HEK293 (cell line): ENCODE measurements at regions of chr19 and their contacts with region 1.

Region 1: DNA sequence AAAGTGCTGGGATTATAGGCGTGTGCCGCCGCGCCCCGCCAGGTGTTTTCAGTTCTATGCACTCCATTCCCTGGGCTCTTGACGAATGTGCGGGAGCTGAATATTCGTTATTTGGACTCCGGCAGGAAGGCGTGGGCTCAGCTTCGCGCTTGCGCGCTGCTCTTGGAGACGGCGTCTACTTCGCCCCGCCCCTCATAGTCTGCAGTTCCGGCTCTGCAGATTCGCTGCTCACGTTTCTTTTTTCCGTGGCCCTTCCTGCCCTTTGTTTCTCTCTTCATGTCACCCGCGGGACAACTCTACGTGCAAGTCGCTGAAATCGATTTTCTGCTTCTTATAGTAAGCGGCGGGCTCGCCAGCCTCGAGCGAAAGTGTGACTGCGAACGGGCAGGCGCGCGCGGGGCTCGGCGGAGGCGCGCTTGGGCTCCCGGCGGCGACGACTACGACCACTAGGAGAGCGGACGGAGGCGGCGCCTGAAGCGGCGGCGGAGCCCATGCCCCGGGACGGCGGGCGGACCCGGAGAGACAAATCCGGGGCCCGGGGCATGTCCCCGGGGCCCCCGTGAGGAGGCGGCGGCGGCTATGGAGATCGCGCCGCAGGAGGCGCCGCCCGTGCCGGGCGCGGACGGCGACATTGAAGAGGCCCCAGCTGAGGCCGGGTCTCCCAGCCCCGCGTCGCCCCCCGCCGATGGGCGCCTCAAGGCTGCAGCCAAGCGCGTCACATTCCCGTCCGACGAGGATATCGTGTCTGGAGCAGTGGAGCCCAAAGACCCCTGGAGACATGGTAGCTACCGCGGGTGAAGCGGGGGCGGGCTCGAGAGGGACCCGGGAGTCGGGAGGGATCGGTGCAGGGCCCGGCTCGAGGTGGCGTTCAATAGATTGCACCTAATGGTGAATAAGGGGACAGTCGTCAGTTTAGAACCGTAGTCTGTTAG is at the start of gene PPP1R37:
- H3K4me3 ChIP-seq: peak within 1 kb of the TSS; percentile 91
- H3K27ac ChIP-seq: peak within 1 kb of the TSS; percentile 96
- H3K4me1 ChIP-seq: peaks cover 27% of the 10 kb centered on the region
- CTCF ChIP-seq: peak; percentile 33; the same call in 1 of the 2 replicates

Region 2: DNA sequence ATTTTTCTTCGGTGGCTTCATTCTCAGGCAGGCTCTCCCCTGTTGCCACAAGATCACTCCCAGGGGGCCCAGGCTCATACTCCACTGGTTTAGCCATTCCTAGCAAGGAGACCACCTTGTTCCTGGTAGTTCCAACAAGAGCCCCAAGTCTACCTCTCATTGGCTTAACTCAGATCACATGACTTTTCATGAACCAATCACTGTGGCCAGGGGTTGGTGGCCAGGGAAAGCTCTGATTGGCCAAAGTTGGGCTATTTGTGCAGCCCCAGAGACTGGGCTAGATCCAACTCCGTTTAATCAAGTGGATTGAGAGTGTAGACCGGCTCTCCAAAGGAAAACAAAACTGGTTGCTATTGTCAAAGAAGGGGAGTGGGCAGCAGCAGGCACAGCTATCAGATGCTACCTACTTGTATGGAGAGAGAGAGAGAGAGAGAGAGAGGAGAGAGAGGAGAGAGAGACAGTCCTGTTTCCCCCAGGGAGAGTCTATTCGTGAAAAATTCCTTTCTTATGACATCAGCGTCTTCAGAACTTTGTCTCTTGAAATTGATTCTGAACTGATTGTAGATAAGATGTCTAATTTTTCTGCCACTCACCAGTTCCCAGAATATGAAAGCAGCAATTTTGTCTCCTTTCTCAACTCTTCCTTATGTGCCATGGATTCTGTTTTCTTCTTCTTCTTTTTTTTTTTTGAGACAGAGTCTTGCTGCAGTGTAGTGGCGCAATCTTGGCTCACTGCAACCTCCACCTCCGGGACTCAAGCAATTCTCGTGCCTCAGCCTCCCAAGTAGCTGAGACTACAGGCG is 415.8 kb before region 1 on chr19:
- CTCF ChIA-PET with region 1: no interaction called
- POLR2A ChIA-PET with region 1: no interaction called
- H3K4me3 ChIP-seq: no peak overlapping the region
- H3K27ac ChIP-seq: no peak overlapping the region
- H3K4me1 ChIP-seq: 0 out of 2 replicates have a peak, but pooled peaks cover 2% of the 10 kb centered on the region
- CTCF ChIP-seq: no peak

Region 3: DNA sequence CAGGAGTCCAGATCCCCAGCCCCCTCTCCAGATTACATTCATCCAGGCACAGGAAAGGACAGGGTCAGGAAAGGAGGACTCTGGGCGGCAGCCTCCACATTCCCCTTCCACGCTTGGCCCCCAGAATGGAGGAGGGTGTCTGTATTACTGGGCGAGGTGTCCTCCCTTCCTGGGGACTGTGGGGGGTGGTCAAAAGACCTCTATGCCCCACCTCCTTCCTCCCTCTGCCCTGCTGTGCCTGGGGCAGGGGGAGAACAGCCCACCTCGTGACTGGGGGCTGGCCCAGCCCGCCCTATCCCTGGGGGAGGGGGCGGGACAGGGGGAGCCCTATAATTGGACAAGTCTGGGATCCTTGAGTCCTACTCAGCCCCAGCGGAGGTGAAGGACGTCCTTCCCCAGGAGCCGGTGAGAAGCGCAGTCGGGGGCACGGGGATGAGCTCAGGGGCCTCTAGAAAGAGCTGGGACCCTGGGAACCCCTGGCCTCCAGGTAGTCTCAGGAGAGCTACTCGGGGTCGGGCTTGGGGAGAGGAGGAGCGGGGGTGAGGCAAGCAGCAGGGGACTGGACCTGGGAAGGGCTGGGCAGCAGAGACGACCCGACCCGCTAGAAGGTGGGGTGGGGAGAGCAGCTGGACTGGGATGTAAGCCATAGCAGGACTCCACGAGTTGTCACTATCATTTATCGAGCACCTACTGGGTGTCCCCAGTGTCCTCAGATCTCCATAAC is 187.4 kb before region 1 on chr19 and contains the start of gene APOE:
- CTCF ChIA-PET with region 1: no interaction called
- POLR2A ChIA-PET with region 1: no interaction called
- H3K4me3 ChIP-seq: peak within 1 kb of the TSS; percentile 13
- H3K27ac ChIP-seq: peak within 1 kb of the TSS; percentile 24; the same call in 1 of the 2 replicates
- H3K4me1 ChIP-seq: peaks cover 6% of the 10 kb centered on the region; the same call in 1 of the 2 replicates
- CTCF ChIP-seq: no peak

Region 4: DNA sequence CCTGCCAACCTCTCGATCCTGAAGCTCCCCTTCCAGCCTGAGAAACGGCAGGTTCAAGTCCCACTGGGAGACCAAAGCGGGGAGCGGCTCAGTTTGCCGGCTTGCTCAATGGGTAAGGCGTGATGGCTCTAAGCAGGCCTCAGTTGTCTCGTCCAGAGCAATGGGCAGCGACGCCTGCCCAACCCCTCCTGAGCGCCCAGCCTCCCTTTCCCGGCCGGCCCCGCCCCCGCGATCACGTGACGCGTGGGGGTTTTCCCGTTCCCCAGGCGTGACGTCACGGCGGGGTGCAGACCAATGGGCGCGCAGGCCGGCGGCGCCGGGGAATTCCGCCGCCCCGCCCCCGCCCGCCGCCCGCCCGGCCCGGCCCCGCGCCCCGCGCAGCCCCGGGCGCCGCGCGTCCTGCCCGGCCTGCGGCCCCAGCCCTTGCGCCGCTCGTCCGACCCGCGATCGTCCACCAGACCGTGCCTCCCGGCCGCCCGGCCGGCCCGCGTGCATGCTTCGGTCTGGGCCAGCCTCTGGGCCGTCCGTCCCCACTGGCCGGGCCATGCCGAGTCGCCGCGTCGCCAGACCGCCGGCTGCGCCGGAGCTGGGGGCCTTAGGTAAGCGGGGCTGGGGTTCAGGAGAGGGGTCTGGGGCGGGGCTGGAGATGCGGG is 91.8 kb before region 1 on chr19 and contains the start of gene RELB:
- CTCF ChIA-PET with region 1: no interaction called
- POLR2A ChIA-PET with region 1: interaction called, 13 read pairs
- H3K4me3 ChIP-seq: peak within 1 kb of the TSS; percentile 69
- H3K27ac ChIP-seq: peak within 1 kb of the TSS; percentile 76
- H3K4me1 ChIP-seq: peaks cover 2% of the 10 kb centered on the region; the same call in 1 of the 2 replicates
- CTCF ChIP-seq: no peak

Region 5: DNA sequence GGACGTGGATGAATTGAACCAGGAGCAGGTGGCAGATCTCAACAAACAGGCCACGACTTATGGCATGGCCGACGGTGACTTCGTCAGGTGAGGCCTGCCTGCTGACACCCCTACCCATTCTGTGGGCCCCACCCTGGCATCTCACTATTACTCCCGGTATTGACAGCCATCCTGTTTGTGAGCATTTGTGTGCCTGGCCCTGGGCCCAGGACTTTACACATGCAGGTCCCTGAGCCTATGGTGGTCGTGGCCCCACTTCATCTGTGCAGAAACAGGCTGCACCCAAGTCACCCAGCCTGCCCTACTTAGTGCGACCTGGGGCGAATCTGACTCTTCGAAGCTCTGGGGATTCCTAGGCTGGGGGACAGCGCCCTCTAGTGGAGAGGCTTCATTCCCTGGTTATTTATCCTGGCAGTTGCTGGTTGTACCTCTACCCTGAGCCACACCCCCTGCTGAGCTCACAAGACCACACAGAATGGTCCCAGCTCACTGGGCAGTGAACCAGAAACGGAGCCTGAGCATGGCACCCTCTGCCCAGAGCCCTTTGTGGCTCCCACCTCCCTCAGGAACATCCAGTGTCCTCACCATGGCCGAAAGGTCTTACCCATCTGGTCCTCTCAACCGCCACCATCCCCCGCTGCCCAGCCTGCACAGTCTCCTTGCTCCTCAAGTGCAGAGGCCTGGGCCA is 33.6 kb before region 1 on chr19:
- CTCF ChIA-PET with region 1: interaction called, 21 read pairs
- POLR2A ChIA-PET with region 1: interaction called, 6 read pairs
- H3K4me3 ChIP-seq: no peak overlapping the region
- H3K27ac ChIP-seq: no peak overlapping the region
- H3K4me1 ChIP-seq: no peaks in the 10 kb centered on the region
- CTCF ChIP-seq: peak; percentile 81; the same call in 1 of the 2 replicates

Region 6: GRCh38 chr19:45103156-45103507 is 10.1 kb after region 1 on chr19:
- CTCF ChIA-PET with region 1: interaction called, 4 read pairs
- POLR2A ChIA-PET with region 1: interaction called, 20 read pairs
- H3K4me3 ChIP-seq: no peak overlapping the region
- H3K27ac ChIP-seq: no peak overlapping the region
- H3K4me1 ChIP-seq: peaks cover 22% of the 10 kb centered on the region
- CTCF ChIP-seq: no peak

Region 7: DNA sequence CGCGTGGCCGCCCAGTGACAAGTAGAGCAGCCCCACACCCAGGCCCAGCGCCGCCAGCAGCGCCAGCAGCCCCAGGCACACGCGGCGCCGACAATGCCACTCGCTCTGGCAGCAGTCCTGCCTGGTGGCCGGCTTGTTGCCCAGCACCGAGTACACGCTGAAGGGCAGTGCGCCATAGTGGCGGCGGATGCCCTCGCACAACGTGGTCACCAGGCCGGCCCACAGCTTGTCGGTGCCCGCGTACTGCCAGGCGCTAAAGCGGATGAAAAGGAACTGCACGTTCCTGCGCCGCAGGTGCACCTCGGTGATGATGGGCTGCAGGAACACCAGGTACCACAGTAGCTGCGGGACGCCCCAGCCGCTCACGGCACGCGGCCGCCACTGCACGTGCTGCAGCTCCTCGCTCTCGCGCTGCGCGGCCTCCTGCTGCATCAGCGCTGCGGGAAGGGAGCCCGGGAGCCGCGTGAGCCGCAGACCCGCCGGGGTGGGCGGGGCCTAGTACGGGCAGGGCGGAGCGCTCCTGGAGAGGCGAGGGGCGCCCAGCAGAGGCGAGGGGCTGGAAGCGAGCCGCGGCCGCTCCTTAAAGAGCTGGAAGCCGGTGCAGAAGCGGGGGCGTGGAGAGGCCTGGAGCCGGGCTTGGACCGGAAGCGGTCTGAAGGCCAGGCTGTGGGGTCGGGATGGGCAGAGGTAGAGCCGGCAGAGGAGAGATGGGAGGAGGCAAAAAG is 60.5 kb after region 1 on chr19:
- CTCF ChIA-PET with region 1: interaction called, 7 read pairs
- POLR2A ChIA-PET with region 1: interaction called, 18 read pairs
- H3K4me3 ChIP-seq: no peak overlapping the region
- H3K27ac ChIP-seq: no peak overlapping the region
- H3K4me1 ChIP-seq: peaks cover 2% of the 10 kb centered on the region; the same call in 1 of the 2 replicates
- CTCF ChIP-seq: no peak

Region 8: GRCh38 chr19:45250832-45251451 is 157.9 kb after region 1 on chr19 and contains the start of gene MARK4:
- CTCF ChIA-PET with region 1: no interaction called
- POLR2A ChIA-PET with region 1: interaction called, 11 read pairs
- H3K4me3 ChIP-seq: peak within 1 kb of the TSS; percentile 72
- H3K27ac ChIP-seq: peak within 1 kb of the TSS; percentile 79
- H3K4me1 ChIP-seq: peaks cover 3% of the 10 kb centered on the region; the same call in 1 of the 2 replicates
- CTCF ChIP-seq: no peak

Region 9: GRCh38 chr19:45323671-45324081 is 230.7 kb after region 1 on chr19:
- CTCF ChIA-PET with region 1: no interaction called
- POLR2A ChIA-PET with region 1: no interaction called
- H3K4me3 ChIP-seq: no peak overlapping the region
- H3K27ac ChIP-seq: no peak overlapping the region
- H3K4me1 ChIP-seq: no peaks in the 10 kb centered on the region
- CTCF ChIP-seq: no peak